ENCODE measurements at regions of chr3 and their contacts with region 1.

Region 1: DNA sequence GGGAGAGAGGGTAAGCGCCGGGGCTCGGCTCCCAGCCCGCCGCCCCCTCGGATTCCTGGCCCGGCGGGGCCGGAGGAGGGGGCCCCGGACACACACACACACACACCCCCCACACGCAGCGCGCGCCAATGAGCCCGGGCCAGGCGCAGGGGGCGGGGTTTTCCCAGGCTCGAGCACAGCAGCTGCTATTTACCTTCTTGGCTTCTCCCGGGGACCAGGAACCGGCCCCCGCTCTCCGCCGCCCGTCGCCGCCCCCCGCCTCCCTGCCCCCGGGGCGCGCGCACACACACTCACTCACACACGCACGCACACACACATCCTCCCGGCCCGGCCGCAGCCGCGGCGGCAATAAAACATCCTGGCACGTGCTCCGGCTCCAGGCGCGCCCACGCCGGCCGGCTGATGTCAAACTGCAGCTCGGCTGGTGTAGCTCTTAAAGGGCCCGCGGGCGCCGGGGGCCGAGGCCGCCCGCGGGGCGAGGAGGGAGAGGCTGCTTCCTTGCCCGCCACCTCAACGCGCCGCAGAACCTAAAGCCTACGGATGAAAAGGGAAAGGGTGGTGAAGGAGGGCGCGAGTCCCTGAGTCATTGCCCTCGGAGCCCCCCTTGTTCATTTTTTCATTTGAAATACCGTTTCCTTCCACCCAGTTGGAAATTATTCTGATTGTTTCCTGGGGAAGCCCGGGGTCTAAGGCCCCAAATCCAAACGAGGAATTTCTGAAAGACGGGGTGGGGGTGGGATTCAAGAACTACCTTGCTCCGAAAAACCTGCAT is 1.0 kb upstream of the HES1 start:
- DNase-seq: peak; percentile 98
- H3K4me3 Mint-ChIP-seq: peak overlapping the region; percentile 97
- H3K27ac Mint-ChIP-seq: peak overlapping the region; percentile 73
- H3K4me1 Mint-ChIP-seq: peaks cover 24% of the 10 kb centered on the region
- H3K27me3 Mint-ChIP-seq: no peaks in the 10 kb centered on the region
- CTCF ChIP-seq: no peak

Region 2: GRCh38 chr3:193665370-193665989 is 469.5 kb before region 1 on chr3:
- CTCF ChIA-PET with region 1: interaction called, 5 read pairs
- POLR2A ChIA-PET with region 1: interaction called, 3 read pairs
- intact Hi-C with region 1: loop called (anchors 2 kb)
- DNase-seq: peak; percentile 40
- H3K4me3 Mint-ChIP-seq: no peak overlapping the region
- H3K27ac Mint-ChIP-seq: no peak overlapping the region
- H3K4me1 Mint-ChIP-seq: no peaks in the 10 kb centered on the region
- H3K27me3 Mint-ChIP-seq: no peaks in the 10 kb centered on the region
- CTCF ChIP-seq: peak; percentile 36

Region 3: GRCh38 chr3:193831495-193832455 is 303.2 kb before region 1 on chr3:
- CTCF ChIA-PET with region 1: interaction called, 7 read pairs
- POLR2A ChIA-PET with region 1: interaction called, 57 read pairs
- intact Hi-C with region 1: loop called (anchors 1 kb)
- DNase-seq: peak; percentile 100
- H3K4me3 Mint-ChIP-seq: peak overlapping the region; percentile 61
- H3K27ac Mint-ChIP-seq: peak overlapping the region; percentile 100
- H3K4me1 Mint-ChIP-seq: peaks cover 56% of the 10 kb centered on the region
- H3K27me3 Mint-ChIP-seq: no peaks in the 10 kb centered on the region
- CTCF ChIP-seq: no peak

Region 4: DNA sequence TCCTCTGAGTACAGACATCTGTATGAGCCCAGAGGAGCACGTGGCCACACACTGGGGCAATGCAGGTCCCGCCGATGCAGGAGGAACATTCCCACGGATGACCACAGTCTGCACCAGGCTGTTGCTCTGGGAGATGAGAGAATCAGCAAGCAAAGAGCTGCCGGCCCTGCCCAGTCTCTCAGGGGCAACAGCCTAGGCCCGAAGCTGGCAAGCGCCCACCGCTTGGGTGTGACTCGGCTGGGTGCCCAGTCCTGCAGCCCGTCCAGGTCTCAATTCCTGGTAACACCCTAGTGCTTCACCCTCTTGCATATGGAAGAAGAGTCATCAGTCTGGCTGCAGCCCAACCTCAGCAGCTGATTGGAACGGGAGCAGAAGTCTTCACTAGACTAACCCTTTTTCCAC is 152.7 kb before region 1 on chr3:
- CTCF ChIA-PET with region 1: no interaction called
- POLR2A ChIA-PET with region 1: interaction called, 4 read pairs
- intact Hi-C with region 1: loop called (anchors 1 kb)
- DNase-seq: peak; percentile 98
- H3K4me3 Mint-ChIP-seq: no peak overlapping the region
- H3K27ac Mint-ChIP-seq: peak overlapping the region; percentile 63
- H3K4me1 Mint-ChIP-seq: peaks cover 38% of the 10 kb centered on the region
- H3K27me3 Mint-ChIP-seq: peaks cover 7% of the 10 kb centered on the region
- CTCF ChIP-seq: no peak

Region 5: DNA sequence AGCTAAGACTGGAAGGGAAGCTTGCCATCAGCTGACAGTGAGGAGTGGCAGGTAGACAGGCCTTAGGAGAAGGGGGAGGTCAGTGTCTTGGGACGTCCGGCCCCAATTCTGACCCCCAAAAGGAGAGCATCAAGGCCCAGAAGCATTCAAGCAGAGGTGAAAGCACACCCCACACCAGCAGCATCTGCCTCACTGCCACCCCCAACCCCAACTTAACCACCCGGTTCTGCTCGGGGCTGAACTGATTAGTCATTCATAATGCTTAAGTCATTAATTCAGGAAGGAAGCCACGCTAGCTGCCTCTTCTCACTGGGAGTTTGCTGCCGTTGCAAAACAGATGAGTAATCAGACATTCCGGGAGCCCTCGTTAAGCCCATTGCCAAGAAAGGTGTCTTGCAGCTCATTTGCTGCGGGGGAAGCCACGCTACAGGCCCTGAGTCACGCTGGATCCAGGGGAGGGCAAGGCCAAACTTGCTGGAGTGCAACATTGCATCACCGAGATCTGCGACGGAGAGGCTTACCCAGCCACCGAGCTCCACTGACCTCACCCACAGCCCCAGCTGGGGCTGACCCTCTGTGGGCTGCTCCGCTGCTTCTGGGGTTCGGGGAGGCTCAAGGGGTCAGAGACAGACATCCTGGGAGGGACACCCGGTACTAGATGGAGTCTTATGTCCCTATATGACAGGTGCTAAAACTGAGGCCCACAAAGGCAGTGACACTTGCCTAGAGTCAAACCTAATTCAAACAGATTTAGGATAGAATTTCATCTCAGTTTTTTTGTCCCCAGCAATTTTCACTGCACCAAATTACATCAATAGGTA is 45.4 kb before region 1 on chr3:
- CTCF ChIA-PET with region 1: interaction called, 8 read pairs
- POLR2A ChIA-PET with region 1: interaction called, 120 read pairs
- intact Hi-C with region 1: loop called (anchors 1 kb)
- DNase-seq: peak; percentile 100
- H3K4me3 Mint-ChIP-seq: peak overlapping the region; percentile 57
- H3K27ac Mint-ChIP-seq: peak overlapping the region; percentile 89
- H3K4me1 Mint-ChIP-seq: peaks cover 25% of the 10 kb centered on the region
- H3K27me3 Mint-ChIP-seq: no peaks in the 10 kb centered on the region
- CTCF ChIP-seq: no peak

Region 6: GRCh38 chr3:194194051-194194756 is 59.3 kb after region 1 on chr3:
- CTCF ChIA-PET with region 1: no interaction called
- POLR2A ChIA-PET with region 1: no interaction called
- intact Hi-C with region 1: no loop called
- DNase-seq: no peak
- H3K4me3 Mint-ChIP-seq: no peak overlapping the region
- H3K27ac Mint-ChIP-seq: peak overlapping the region; percentile 59
- H3K4me1 Mint-ChIP-seq: no peaks in the 10 kb centered on the region
- H3K27me3 Mint-ChIP-seq: peaks cover 15% of the 10 kb centered on the region
- CTCF ChIP-seq: no peak

Region 7: GRCh38 chr3:194404365-194405140 is 269.6 kb after region 1 on chr3:
- CTCF ChIA-PET with region 1: interaction called, 3 read pairs
- POLR2A ChIA-PET with region 1: no interaction called
- intact Hi-C with region 1: loop called (anchors 10 kb)
- DNase-seq: peak; percentile 60
- H3K4me3 Mint-ChIP-seq: no peak overlapping the region
- H3K27ac Mint-ChIP-seq: no peak overlapping the region
- H3K4me1 Mint-ChIP-seq: no peaks in the 10 kb centered on the region
- H3K27me3 Mint-ChIP-seq: no peaks in the 10 kb centered on the region
- CTCF ChIP-seq: peak; percentile 72